ENCODE measurements at regions of chr1 and their contacts with region 1.

Region 1: DNA sequence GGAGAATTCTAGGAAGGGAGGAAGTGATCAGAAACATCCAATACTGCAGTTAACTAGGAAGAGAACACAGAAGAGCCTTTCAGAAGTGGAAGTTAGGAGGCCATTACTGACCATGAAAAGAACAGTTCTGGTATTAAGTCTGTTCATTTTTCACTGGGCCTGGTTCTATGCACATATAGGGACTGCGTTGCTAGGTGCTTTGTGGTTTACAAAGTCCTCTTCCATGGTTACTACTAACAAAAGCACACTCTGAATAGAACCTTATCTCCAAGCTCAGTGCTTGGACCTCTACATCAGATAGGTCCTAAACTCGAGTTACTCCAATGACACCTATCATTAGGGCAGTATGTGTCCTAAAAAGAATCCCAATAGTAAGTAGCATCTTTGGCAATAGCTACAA is 75.4 kb downstream of the RPAP2 start:
- DNase-seq: no peak
- H3K4me3 ChIP-seq: no peak overlapping the region
- H3K27ac ChIP-seq: no peak overlapping the region
- H3K4me1 ChIP-seq: no peaks in the 10 kb centered on the region
- H3K27me3 ChIP-seq: no peaks in the 10 kb centered on the region
- CTCF ChIP-seq: no peak
- EP300 ChIP-seq: no peak
- POLR2A ChIP-seq: no peak

Region 2: DNA sequence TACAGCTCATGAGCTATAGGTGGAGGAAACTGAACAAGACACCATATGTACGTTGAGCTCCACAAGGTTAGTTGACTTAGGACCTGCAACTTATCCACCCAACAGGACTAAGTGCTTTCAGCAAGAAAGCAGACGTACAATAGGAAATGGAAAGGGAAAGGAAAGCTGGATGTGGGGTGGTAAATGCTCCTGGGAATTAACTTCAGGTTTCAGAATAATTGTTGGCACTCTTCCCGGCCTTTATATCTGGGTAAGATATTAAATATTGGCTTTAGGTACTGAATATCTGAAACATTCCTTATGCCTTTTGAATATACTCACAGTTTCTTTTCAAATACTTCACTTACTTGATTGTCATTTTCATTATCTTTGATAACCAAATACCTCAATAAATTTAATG is 111.7 kb before region 1 on chr1:
- in situ Hi-C with region 1: no loop called
- intact Hi-C with region 1: loop called (anchors 2 kb)
- DNase-seq: no peak
- H3K4me3 ChIP-seq: no peak overlapping the region
- H3K27ac ChIP-seq: no peak overlapping the region
- H3K4me1 ChIP-seq: no peaks in the 10 kb centered on the region
- H3K27me3 ChIP-seq: no peaks in the 10 kb centered on the region
- CTCF ChIP-seq: no peak
- EP300 ChIP-seq: no peak
- POLR2A ChIP-seq: no peak

Measured in transverse colon (tissue), 4 donors.